ENCODE measurements at regions of chr6 and their contacts with region 1.

Region 1: GRCh38 chr6:125446011-125446410 is 144.2 kb upstream of the HDDC2 start:
- DNase-seq: no peak
- H3K4me3 ChIP-seq: no peak overlapping the region
- H3K27ac ChIP-seq: no peak overlapping the region
- H3K4me1 ChIP-seq: no peaks in the 10 kb centered on the region
- H3K27me3 ChIP-seq: peaks cover 4 to 16% of the 10 kb centered on the region in 2 experiments
- CTCF ChIP-seq: no peak
- POLR2A ChIP-seq: no peak

Region 2: DNA sequence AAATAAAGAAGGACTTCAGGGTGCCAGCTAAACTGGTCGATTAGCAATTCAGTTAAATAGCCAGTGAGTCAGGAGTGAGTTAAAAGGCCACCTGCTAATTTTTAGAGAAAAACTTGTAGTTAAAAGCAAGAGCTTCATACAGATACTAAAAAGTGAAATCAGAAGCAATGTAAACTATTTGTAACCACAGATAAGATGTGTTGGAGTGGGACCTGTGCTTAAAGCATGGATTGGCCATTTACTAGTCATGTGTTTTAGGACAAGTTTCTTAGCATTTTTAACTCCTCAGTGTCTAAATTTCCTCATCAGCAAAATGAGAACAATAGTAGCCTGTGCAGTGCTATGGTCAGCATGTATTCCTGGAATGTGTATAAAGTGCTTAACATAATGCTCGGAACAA is 120.4 kb before region 1 on chr6:
- CTCF ChIA-PET with region 1: no interaction called
- POLR2A ChIA-PET with region 1: no interaction called
- dilution Hi-C with region 1: no loop called
- intact Hi-C with region 1: no loop called
- DNase-seq: no peak
- H3K4me3 ChIP-seq: no peak overlapping the region
- H3K27ac ChIP-seq: no peak overlapping the region
- H3K4me1 ChIP-seq: no peaks in the 10 kb centered on the region
- H3K27me3 ChIP-seq: peaks cover 9 to 14% of the 10 kb centered on the region in 2 experiments
- CTCF ChIP-seq: no peak
- POLR2A ChIP-seq: no peak

Region 3: GRCh38 chr6:125406741-125407140 is 39.3 kb before region 1 on chr6:
- CTCF ChIA-PET with region 1: no interaction called
- POLR2A ChIA-PET with region 1: no interaction called
- dilution Hi-C with region 1: no loop called
- intact Hi-C with region 1: no loop called
- DNase-seq: no peak
- H3K4me3 ChIP-seq: no peak overlapping the region
- H3K27ac ChIP-seq: no peak overlapping the region
- H3K4me1 ChIP-seq: no peaks in the 10 kb centered on the region
- H3K27me3 ChIP-seq: no peaks in the 10 kb centered on the region
- CTCF ChIP-seq: no peak
- POLR2A ChIP-seq: no peak

Region 4: DNA sequence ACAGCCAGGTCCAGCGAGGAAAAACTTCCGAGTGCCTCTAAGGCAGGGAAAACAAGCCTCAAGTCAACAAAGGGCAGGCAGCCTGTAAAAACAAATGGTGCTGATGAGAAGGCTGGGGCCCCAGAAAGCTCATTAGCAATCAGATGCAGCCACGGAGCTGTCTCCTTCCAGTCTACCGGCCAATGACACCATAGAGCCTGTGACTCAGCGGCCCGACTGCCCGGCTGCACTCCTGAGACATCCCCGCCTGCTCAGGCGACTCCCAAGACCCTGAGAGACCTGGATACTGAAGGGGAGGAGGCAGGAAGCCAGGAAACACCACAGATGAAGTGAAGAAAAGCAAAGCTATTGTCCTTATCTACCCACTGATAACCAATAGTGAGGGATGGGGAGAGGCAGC is 24.2 kb before region 1 on chr6:
- CTCF ChIA-PET with region 1: no interaction called
- POLR2A ChIA-PET with region 1: no interaction called
- dilution Hi-C with region 1: no loop called
- intact Hi-C with region 1: loop called (anchors 1 kb)
- DNase-seq: peak; percentile 22
- H3K4me3 ChIP-seq: no peak overlapping the region
- H3K27ac ChIP-seq: peak overlapping the region; percentile 24
- H3K4me1 ChIP-seq: peaks cover 8% of the 10 kb centered on the region
- H3K27me3 ChIP-seq: peaks cover 0 to 2% of the 10 kb centered on the region in 2 experiments
- CTCF ChIP-seq: no peak
- POLR2A ChIP-seq: no peak